Ovary (tissue), 10 donors: ENCODE measurements at regions of chr19 and their contacts with region 1.

Region 1: GRCh38 chr19:38213911-38214625 is 10.0 kb downstream of the DPF1 start:
- DNase-seq: no peak
- H3K4me3 ChIP-seq: no peak overlapping the region
- H3K27ac ChIP-seq: no peak overlapping the region
- H3K4me1 ChIP-seq: peaks cover 2% of the 10 kb centered on the region
- H3K27me3 ChIP-seq: no peaks in the 10 kb centered on the region
- CTCF ChIP-seq: no peak
- EP300 ChIP-seq: no peak
- POLR2A ChIP-seq: no peak

Region 2: DNA sequence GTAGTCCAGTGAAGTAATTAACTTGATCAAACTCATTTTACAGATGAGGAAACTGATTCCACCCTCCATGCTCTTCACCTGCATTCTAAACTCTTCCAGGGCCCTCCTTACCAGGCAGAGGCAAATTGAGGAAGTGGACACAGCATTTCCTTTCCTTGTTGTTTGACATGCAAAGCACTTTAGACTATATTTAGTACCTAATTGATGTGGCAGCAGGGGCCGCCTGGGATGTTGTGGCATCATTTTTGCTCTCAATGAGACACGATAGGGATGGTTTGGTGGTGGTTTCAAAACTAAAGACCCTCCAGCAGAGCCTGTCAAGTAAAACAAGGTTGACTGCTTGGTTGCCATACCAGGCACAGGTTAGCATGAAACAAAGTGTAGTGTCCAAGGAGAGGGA is 299.2 kb before region 1 on chr19:
- intact Hi-C with region 1: loop called in 1 of 4 experiments (anchors 10 kb)
- DNase-seq: no peak
- H3K4me3 ChIP-seq: no peak overlapping the region
- H3K27ac ChIP-seq: no peak overlapping the region
- H3K4me1 ChIP-seq: no peaks in the 10 kb centered on the region
- H3K27me3 ChIP-seq: no peaks in the 10 kb centered on the region
- CTCF ChIP-seq: no peak
- EP300 ChIP-seq: no peak
- POLR2A ChIP-seq: no peak

Region 3: GRCh38 chr19:38394488-38394887 is 180.4 kb after region 1 on chr19:
- intact Hi-C with region 1: no loop called
- DNase-seq: no peak
- H3K4me3 ChIP-seq: no peak overlapping the region
- H3K27ac ChIP-seq: no peak overlapping the region
- H3K4me1 ChIP-seq: no peaks in the 10 kb centered on the region
- H3K27me3 ChIP-seq: no peaks in the 10 kb centered on the region
- CTCF ChIP-seq: no peak
- EP300 ChIP-seq: no peak
- POLR2A ChIP-seq: no peak